Activated CD4-positive, alpha-beta memory T cell treated with anti-CD3 and anti-CD28 coated beads for 36 hours (primary cell): ENCODE measurements at regions of chr20 and their contacts with region 1.

Region 1: DNA sequence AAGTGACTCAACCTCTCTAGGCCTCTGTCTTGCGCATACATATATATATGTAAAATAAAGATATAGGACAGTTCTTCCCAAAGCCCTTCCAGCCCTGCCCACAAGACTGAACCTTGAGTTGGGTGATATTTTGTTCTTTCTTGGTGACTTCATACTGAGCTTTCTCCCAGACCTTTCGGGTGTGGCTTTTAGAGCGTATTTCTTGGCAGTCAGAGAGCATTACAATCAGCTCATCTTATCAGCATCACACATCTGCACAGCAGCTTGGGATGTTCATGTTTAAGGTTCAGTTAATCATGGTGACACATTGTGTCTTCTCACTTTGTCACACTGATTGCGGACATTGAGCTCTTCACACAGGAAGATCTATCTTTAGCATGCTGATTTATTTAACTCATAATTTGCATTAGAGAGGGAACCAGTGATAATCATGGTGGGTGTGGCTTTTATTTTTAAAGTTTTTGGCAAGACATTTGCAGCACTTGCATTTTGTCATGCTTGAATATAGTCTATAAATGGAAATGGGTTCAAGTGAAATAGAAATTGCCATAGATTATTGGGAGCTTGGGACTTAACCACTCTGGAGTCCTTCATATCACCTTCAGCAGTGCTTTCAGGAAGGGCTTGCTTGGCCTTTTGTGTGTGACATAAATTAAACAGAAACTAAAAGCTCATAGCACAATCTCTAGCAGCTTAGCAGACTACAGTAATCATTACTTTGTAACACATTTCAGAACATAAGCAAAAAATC is 8.3 kb downstream of the KIF3B start:
- DNase-seq: peak; percentile 69
- H3K4me3 Mint-ChIP-seq: peak overlapping the region; percentile 62
- H3K27ac Mint-ChIP-seq: peak overlapping the region; percentile 91
- H3K4me1 Mint-ChIP-seq: peaks cover 85% of the 10 kb centered on the region
- H3K27me3 Mint-ChIP-seq: no peaks in the 10 kb centered on the region

Region 2: DNA sequence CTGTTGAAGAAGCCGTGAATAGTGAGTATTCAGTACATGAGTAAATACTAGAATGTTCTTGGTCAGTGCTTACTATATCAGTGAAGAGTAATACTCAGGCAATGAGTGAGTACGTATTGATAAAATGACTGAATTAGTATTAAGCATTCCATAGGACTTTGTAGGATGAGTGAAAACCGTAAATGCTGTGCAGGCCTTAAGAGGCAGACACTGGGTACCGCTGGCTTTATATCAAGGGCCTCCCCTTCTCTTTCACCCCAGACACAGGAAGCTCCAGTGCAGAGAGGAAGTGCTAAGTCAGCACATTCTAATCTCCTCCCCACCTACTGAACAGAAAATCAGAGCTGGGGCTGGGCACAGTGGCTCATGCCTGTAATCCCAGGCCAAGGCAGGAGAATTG is 53.9 kb before region 1 on chr20:
- CTCF ChIA-PET with region 1: no interaction called
- POLR2A ChIA-PET with region 1: interaction called, 36 read pairs
- intact Hi-C with region 1: loop called (anchors 1 kb)
- DNase-seq: peak; percentile 75
- H3K4me3 Mint-ChIP-seq: peak overlapping the region; percentile 45
- H3K27ac Mint-ChIP-seq: peak overlapping the region; percentile 97
- H3K4me1 Mint-ChIP-seq: peaks cover 50% of the 10 kb centered on the region
- H3K27me3 Mint-ChIP-seq: no peaks in the 10 kb centered on the region

Region 3: GRCh38 chr20:32249030-32249738 is 36.6 kb before region 1 on chr20:
- CTCF ChIA-PET with region 1: interaction called, 6 read pairs
- POLR2A ChIA-PET with region 1: interaction called, 11 read pairs
- intact Hi-C with region 1: loop called (anchors 1 kb)
- DNase-seq: peak; percentile 55
- H3K4me3 Mint-ChIP-seq: no peak overlapping the region
- H3K27ac Mint-ChIP-seq: peak overlapping the region; percentile 89
- H3K4me1 Mint-ChIP-seq: peaks cover 55% of the 10 kb centered on the region
- H3K27me3 Mint-ChIP-seq: no peaks in the 10 kb centered on the region

Region 4: DNA sequence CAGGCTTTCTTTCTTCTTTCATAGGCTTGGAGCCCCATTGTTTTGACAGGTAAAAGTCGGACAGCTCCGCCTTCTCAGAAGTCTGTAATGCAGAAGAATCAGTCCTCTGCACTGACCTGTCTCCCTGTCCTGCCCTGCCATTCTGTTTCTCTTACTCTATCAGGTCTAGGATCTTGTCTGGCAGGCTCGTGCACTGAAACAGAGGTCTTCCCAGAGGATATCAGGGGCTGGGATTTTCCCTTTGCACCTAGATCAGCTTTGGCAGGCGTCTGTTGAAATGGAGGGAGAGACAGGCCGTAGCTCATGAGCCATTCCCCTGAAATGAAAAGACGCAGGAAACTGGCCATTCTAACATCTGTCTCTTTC is 16.7 kb after region 1 on chr20:
- CTCF ChIA-PET with region 1: no interaction called
- POLR2A ChIA-PET with region 1: interaction called, 4 read pairs
- intact Hi-C with region 1: loop called (anchors 2 kb)
- DNase-seq: no peak
- H3K4me3 Mint-ChIP-seq: no peak overlapping the region
- H3K27ac Mint-ChIP-seq: peak overlapping the region; percentile 66
- H3K4me1 Mint-ChIP-seq: peaks cover 47% of the 10 kb centered on the region
- H3K27me3 Mint-ChIP-seq: no peaks in the 10 kb centered on the region

Region 5: DNA sequence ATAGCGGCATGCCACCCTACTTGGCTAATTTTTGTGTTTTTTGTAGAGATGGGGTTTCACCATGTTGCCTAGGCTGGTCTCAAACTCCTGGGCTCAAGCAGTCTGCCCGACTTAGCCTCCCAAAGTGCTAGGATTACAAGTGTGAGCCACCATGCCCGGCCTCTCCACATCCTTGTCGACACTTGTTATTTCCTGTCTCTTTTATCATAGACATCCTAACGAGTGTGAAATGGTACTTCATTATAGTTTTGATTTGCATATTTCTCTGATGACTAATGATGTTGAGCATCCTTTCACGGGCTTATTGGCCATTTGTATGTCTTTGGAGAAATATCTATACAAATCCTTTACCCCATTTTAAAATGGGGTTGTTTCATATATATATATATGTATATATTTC is 33.3 kb after region 1 on chr20:
- CTCF ChIA-PET with region 1: interaction called, 5 read pairs
- POLR2A ChIA-PET with region 1: interaction called, 3 read pairs
- intact Hi-C with region 1: loop called (anchors 2 kb)
- DNase-seq: peak; percentile 34
- H3K4me3 Mint-ChIP-seq: no peak overlapping the region
- H3K27ac Mint-ChIP-seq: peak overlapping the region; percentile 47
- H3K4me1 Mint-ChIP-seq: peaks cover 18% of the 10 kb centered on the region
- H3K27me3 Mint-ChIP-seq: no peaks in the 10 kb centered on the region

Region 6: GRCh38 chr20:32484958-32485769 is 199.4 kb after region 1 on chr20:
- CTCF ChIA-PET with region 1: no interaction called
- POLR2A ChIA-PET with region 1: interaction called, 3 read pairs
- intact Hi-C with region 1: loop called (anchors 10 kb)
- DNase-seq: peak; percentile 91
- H3K4me3 Mint-ChIP-seq: peak overlapping the region; percentile 86
- H3K27ac Mint-ChIP-seq: peak overlapping the region; percentile 93
- H3K4me1 Mint-ChIP-seq: peaks cover 26% of the 10 kb centered on the region
- H3K27me3 Mint-ChIP-seq: no peaks in the 10 kb centered on the region

Region 7: GRCh38 chr20:32574296-32575226 is 288.8 kb after region 1 on chr20:
- CTCF ChIA-PET with region 1: no interaction called
- POLR2A ChIA-PET with region 1: no interaction called
- intact Hi-C with region 1: no loop called
- DNase-seq: peak; percentile 74
- H3K4me3 Mint-ChIP-seq: no peak overlapping the region
- H3K27ac Mint-ChIP-seq: no peak overlapping the region
- H3K4me1 Mint-ChIP-seq: peaks cover 44% of the 10 kb centered on the region
- H3K27me3 Mint-ChIP-seq: no peaks in the 10 kb centered on the region